ENCODE measurements at regions of chr9 and their contacts with region 1.

Region 1: DNA sequence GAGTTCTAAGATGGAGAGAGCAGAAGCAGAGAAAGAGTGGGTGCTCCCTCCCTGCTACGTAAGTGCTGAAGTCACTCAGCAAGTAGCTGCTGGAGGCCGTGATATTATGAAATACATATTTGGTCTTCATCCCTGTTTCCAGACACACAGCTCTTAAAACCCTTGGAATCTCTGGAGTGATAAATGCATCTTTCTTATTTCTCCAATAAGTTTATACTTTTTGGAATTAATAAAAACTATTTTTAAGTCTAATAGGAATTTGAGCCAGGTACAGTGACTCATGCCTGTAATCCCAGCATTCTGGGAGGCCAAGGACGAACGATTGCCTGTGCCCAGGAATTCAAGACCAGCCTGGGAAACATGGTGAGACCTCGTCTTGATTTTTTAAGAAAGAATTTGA is 60.6 kb downstream of the AUH start:
- DNase-seq: no peak
- H3K4me3 ChIP-seq: no peak overlapping the region
- H3K27ac ChIP-seq: peak overlapping the region; percentile 86
- H3K4me1 ChIP-seq: peaks cover 8 to 26% of the 10 kb centered on the region in 2 donors
- H3K27me3 ChIP-seq: no peaks in the 10 kb centered on the region
- CTCF ChIP-seq: no peak

Region 2: GRCh38 chr9:90921111-90921510 is 380.1 kb before region 1 on chr9:
- intact Hi-C with region 1: loop called (anchors 2 kb)
- DNase-seq: peak; percentile 70 to 95
- H3K4me3 ChIP-seq: no peak overlapping the region
- H3K27ac ChIP-seq: peak overlapping the region; percentile 77 to 80
- H3K4me1 ChIP-seq: peaks cover 6 to 25% of the 10 kb centered on the region in 2 donors
- H3K27me3 ChIP-seq: no peaks in the 10 kb centered on the region
- CTCF ChIP-seq: no peak

Region 3: DNA sequence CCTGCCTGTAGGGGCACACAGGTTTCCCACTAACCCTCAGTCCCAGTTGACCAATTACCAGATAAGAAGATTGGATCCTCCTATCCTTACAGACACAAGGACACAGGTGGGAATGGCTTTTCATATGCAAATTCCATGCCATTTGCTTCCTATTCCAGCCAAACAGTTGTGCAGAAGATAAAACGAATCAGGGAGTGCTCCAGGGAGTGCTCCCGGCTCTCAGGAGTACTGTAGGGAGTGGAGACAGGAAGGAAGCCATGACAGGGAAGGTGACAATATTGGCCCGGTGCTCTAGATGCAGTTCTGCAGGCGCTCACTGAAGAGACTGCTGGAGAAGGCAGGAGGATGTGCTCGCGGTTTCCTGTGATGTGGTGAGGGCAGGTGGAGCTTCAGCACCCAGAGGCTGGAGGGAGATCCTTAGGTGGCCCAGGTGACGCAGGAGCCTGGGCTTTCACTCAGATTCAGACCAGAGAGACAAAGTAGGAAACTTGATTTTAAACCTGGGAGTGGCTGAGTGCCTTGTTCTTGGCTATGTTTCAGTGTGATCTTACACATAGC is 199.5 kb before region 1 on chr9:
- intact Hi-C with region 1: loop called (anchors 5 kb)
- DNase-seq: no peak
- H3K4me3 ChIP-seq: no peak overlapping the region
- H3K27ac ChIP-seq: peak overlapping the region; percentile 82 to 85
- H3K4me1 ChIP-seq: peaks cover 8 to 17% of the 10 kb centered on the region in 2 donors
- H3K27me3 ChIP-seq: no peaks in the 10 kb centered on the region
- CTCF ChIP-seq: no peak

Region 4: DNA sequence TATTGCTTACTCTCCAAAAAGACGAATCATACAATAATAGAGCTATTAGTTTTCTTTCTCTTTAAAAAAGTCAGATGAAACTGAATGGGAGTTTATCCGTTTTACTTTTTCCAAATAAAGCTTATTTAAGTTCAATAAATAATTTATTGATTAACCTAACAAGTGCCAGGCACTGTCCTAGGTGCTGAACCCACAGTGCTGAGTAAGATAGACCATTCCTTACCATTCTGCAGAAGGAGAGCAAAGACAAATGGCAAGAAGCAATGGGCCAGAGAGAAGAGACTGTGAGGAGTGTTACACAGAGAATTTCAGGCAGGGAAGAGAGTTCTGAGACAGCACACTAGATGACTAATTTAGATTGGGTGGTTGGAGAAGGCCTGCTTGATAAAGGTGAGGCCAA is 66.7 kb before region 1 on chr9:
- intact Hi-C with region 1: no loop called
- DNase-seq: no peak
- H3K4me3 ChIP-seq: no peak overlapping the region
- H3K27ac ChIP-seq: no peak overlapping the region
- H3K4me1 ChIP-seq: no peaks in the 10 kb centered on the region
- H3K27me3 ChIP-seq: no peaks in the 10 kb centered on the region
- CTCF ChIP-seq: no peak

Region 5: GRCh38 chr9:91361291-91362050 is 60.3 kb after region 1 on chr9 and contains the start of gene AUH:
- intact Hi-C with region 1: loop called (anchors 5 kb)
- DNase-seq: peak; percentile 38 to 89
- H3K4me3 ChIP-seq: peak within 1 kb of the TSS; percentile 89 to 96
- H3K27ac ChIP-seq: peak within 1 kb of the TSS; percentile 86 to 88
- H3K4me1 ChIP-seq: peaks cover 0 to 7% of the 10 kb centered on the region in 2 donors
- H3K27me3 ChIP-seq: no peaks in the 10 kb centered on the region
- CTCF ChIP-seq: no peak
- total RNA-seq, gene AUH: 46.2 TPM

Region 6: GRCh38 chr9:91483189-91483691 is 182.1 kb after region 1 on chr9:
- intact Hi-C with region 1: loop called (anchors 5 kb)
- DNase-seq: peak; percentile 29 to 85
- H3K4me3 ChIP-seq: peak overlapping the region in 1 of 2 donors; percentile 34
- H3K27ac ChIP-seq: peak overlapping the region; percentile 76 to 84
- H3K4me1 ChIP-seq: peaks cover 0 to 7% of the 10 kb centered on the region in 2 donors
- H3K27me3 ChIP-seq: no peaks in the 10 kb centered on the region
- CTCF ChIP-seq: no peak